MCF 10A (cell line): ENCODE measurements at regions of chr10 and their contacts with region 1.

Region 1: DNA sequence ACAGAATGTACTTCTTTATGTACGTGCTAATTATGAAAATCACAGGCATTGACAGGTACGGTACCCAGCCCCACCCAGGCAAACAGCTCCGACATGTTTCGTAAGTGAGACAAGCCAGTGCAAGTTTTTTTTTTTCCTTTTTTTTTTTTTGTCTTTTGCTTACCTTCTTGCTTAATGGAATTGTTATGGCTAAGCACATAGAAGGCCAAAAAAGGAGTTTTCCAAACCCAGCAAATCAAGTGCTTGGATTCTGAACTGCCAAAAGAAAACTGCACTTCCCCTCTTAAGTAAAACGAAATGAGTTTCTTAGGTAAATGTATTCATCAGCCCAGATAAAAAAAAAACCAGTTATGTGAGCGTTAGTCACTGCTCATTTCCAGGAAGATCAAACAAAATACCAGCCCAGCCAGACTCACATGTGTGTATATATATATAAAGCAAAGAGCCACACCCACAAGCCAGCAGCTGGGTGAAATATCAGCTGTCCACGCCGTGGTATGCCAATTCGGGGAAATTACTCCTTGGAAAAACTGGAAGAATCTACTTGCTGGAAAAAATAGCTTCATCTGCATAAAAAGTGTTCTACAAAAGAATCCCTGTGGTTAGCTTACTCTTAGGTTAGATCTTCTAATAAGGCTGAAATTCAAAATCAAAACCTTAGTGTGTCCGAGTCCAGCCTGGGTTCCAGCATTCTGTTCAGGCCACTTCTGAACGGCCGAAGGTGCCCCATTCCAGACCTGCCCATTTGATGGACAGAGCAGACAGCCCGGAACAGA is 8.0 kb downstream of the KLF6 start:
- DNase-seq: peak; percentile 92
- H3K4me3 Mint-ChIP-seq: peak overlapping the region; percentile 44
- H3K27ac Mint-ChIP-seq: peak overlapping the region; percentile 75
- H3K4me1 Mint-ChIP-seq: peaks cover 45% of the 10 kb centered on the region
- H3K27me3 Mint-ChIP-seq: no peaks in the 10 kb centered on the region
- CTCF ChIP-seq: no peak

Region 2: GRCh38 chr10:3467052-3467951 is 309.7 kb before region 1 on chr10:
- CTCF ChIA-PET with region 1: interaction called, 3 read pairs
- POLR2A ChIA-PET with region 1: interaction called, 94 read pairs
- intact Hi-C with region 1: loop called (anchors 1 kb)
- DNase-seq: peak; percentile 97
- H3K4me3 Mint-ChIP-seq: peak overlapping the region; percentile 79
- H3K27ac Mint-ChIP-seq: peak overlapping the region; percentile 100
- H3K4me1 Mint-ChIP-seq: peaks cover 46% of the 10 kb centered on the region
- H3K27me3 Mint-ChIP-seq: no peaks in the 10 kb centered on the region
- CTCF ChIP-seq: peak; percentile 55

Region 3: DNA sequence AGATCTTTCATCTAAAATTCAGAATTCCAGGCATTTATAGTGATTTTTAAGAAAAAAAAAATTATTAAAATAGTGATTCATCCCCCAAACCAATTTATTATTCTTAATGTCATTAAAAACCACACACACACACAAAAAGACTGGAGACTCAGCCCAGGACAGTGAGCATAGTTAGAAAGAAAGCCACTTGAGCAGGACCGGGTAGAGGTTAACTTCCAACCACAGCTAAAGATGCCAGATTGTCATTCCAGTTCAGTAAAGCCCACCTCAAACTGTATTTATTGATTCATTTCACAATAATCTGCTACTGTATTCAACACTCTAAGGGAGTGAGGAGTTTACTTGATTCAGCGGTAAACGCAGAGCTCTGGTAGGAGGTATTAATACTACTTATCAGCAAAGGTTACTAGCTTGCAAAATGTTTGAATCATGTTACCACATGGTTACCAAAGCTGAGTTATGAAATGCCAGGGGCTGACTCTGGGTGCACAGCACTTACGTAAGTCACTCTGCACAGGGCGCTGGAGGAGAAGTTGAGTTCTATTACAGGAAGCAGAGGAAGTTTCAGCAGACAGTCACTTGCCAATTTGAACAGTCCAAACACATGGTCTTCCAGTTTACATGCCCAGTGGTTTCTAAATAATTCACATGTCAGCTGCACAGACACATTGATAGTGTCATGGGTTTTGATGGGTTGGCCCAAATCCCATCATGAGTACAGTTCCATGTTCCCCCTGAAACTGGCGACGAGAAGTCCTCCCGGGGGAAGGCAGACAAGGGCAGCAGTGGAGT is 56.6 kb before region 1 on chr10:
- CTCF ChIA-PET with region 1: no interaction called
- POLR2A ChIA-PET with region 1: interaction called, 11 read pairs
- intact Hi-C with region 1: no loop called
- DNase-seq: peak; percentile 95
- H3K4me3 Mint-ChIP-seq: no peak overlapping the region
- H3K27ac Mint-ChIP-seq: peak overlapping the region; percentile 73
- H3K4me1 Mint-ChIP-seq: peaks cover 11% of the 10 kb centered on the region
- H3K27me3 Mint-ChIP-seq: no peaks in the 10 kb centered on the region
- CTCF ChIP-seq: no peak

Region 4: DNA sequence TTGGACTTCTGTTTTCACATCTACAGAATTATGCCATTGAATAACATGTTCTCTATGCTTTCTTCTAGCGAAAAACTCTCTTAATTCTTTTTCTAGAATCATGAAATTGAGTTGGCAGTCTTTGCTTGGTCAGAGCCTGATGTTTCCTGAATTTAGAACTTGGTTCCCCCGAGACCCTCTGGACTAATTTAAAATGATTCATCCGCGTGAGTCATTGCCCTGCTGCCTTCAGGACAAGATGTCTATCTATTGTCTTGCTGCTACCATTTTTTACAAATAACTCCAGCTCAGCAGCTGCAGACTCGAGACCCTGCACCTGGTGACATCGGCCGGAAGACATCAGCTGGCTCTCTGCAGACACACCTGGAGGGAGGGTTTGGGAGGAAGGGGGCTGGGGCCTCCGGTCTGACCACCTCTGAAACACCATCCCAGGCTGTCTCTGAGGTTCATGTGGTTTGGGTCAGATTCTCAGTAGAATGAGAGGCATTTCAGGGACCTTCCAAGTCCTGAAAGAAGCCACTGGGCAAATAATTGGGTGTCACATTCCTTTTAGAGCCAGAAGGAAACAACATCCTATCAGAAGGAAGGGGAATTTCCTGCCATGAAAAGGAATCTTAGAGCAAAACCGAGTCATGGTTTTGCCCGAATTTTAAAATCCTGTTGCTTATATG is 28.9 kb after region 1 on chr10:
- CTCF ChIA-PET with region 1: interaction called, 5 read pairs
- POLR2A ChIA-PET with region 1: interaction called, 571 read pairs
- intact Hi-C with region 1: no loop called
- DNase-seq: peak; percentile 73
- H3K4me3 Mint-ChIP-seq: peak overlapping the region; percentile 23
- H3K27ac Mint-ChIP-seq: peak overlapping the region; percentile 100
- H3K4me1 Mint-ChIP-seq: peaks cover 47% of the 10 kb centered on the region
- H3K27me3 Mint-ChIP-seq: no peaks in the 10 kb centered on the region
- CTCF ChIP-seq: no peak

Region 5: DNA sequence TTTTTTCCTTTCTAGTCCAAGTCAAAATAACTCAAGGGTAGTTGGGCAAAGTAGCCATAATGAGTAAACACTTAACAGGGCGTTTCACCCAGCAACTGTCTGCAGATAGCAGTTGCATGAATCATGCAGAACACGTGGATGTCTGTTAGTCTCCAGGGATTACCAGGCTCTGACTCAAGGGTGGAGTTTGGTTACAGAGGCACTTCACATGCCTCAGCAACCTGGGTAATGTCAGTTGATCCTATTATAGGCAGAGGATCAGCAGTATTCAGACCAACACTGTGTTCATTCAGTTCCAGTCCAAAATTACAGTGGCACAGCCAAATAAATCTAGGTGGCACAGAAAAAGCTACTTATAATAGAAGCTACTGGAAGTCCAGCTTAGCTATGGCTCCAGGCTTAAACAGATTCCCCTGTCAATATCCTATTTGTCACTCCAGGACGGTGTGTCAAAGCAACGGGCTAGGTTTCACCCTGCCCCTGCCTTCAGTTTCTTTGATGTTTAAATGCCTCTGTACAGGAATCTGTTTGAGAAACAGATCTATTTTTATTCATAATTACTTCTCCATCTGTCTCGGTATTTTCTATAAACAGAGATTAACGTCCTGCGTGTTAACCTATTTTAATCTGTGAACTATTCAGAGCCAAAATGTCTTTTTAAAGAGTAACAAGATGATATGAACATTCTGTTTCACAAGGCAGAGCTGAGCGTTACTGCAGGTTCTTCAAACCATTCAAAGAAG is 886.3 kb after region 1 on chr10:
- CTCF ChIA-PET with region 1: interaction called, 3 read pairs
- POLR2A ChIA-PET with region 1: interaction called, 69 read pairs
- intact Hi-C with region 1: no loop called
- DNase-seq: peak; percentile 99
- H3K4me3 Mint-ChIP-seq: peak overlapping the region; percentile 66
- H3K27ac Mint-ChIP-seq: peak overlapping the region; percentile 100
- H3K4me1 Mint-ChIP-seq: peaks cover 28% of the 10 kb centered on the region
- H3K27me3 Mint-ChIP-seq: no peaks in the 10 kb centered on the region
- CTCF ChIP-seq: no peak